Mammary epithelial cell (primary cell): ENCODE measurements at regions of chr12 and their contacts with region 1.

Region 1: DNA sequence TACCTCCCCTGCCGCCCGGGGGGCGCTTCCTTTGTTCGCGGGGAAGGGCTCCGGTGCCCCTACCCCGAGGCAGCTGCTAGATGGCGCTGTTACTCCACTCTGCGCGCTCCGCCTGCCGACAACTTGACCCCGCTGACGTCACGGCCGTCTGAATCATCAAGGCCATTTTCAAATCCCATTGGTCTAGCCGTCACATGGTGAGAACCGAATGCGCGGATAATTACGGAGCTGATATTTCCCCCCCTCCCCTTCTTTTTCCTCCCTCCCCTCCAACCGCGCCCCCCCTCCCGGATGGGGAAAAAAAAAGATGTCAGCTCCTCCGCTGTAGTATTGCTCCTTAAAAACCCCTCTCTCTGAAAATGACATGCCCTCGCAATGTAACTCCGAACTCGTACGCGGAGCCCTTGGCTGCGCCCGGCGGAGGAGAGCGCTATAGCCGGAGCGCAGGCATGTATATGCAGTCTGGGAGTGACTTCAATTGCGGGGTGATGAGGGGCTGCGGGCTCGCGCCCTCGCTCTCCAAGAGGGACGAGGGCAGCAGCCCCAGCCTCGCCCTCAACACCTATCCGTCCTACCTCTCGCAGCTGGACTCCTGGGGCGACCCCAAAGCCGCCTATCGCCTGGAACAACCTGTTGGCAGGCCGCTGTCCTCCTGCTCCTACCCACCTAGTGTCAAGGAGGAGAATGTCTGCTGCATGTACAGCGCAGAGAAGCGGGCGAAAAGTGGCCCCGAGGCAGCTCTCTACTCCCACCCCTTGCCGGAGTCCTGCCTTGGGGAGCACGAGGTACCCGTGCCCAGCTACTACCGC is at the start of gene HOXC10:
- DNase-seq: peak; percentile 75
- H3K4me3 ChIP-seq: peak within 1 kb of the TSS in 2 of 3 experiments; percentile 31 to 38
- H3K27ac ChIP-seq: no peak within 1 kb of the TSS
- H3K4me1 ChIP-seq: peaks cover 23% of the 10 kb centered on the region
- H3K27me3 ChIP-seq: no peaks in the 10 kb centered on the region
- CTCF ChIP-seq: peak; percentile 60 to 80
- total RNA-seq, gene HOXC10: 3.3 to 3.8 TPM

Region 2: DNA sequence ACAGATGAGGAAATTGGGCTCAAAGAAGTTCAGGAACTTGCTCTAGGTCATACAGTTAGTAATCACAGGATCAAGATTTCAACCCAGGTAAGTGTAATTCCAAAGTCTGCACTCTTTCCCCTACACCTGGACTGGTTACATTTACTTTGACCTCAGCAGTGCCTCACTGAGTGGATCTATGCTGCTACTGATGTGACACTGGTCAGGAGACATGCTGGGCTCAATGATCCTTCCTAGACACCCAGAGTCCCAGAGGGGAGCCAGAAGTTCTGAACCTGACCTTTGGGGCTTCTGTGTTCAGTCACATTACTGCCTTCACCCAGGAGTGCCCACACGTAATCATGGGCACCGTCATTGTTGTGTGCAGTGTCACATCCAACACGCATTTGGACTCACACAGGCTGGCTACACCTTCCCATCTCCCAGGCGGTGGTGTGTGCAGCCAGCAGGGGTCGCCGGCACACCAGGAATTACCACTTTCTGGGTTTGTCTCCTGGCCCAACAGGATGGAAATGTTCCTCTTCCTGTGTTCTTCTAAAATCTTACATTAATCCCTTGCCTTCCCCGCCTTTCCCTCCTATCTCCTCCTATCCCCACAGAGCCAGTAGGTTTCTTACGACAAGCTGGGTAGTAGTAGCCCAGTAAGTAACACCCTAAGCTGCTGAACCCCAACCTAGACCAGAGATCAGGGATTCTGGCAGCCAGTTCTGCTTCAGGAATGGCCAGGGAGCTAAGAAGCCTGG is 283.4 kb before region 1 on chr12:
- CTCF ChIA-PET with region 1: no interaction called
- dilution Hi-C with region 1: no loop called
- in situ Hi-C with region 1: no loop called
- intact Hi-C with region 1: loop called (anchors 5 kb)
- DNase-seq: peak; percentile 54
- H3K4me3 ChIP-seq: no peak overlapping the region
- H3K27ac ChIP-seq: no peak overlapping the region
- H3K4me1 ChIP-seq: no peaks in the 10 kb centered on the region
- H3K27me3 ChIP-seq: peaks cover 2% of the 10 kb centered on the region
- CTCF ChIP-seq: peak; percentile 94 to 99

Region 3: GRCh38 chr12:53791735-53792326 is 193.3 kb before region 1 on chr12:
- CTCF ChIA-PET with region 1: no interaction called
- dilution Hi-C with region 1: no loop called
- in situ Hi-C with region 1: no loop called
- intact Hi-C with region 1: loop called (anchors 1 kb)
- DNase-seq: peak; percentile 26
- H3K4me3 ChIP-seq: no peak overlapping the region
- H3K27ac ChIP-seq: no peak overlapping the region
- H3K4me1 ChIP-seq: no peaks in the 10 kb centered on the region
- H3K27me3 ChIP-seq: no peaks in the 10 kb centered on the region
- CTCF ChIP-seq: peak; percentile 48 to 68

Region 4: GRCh38 chr12:53999559-54000104 is 14.5 kb after region 1 on chr12:
- CTCF ChIA-PET with region 1: interaction called, 3 read pairs
- dilution Hi-C with region 1: no loop called
- in situ Hi-C with region 1: no loop called
- intact Hi-C with region 1: loop called (anchors 2 kb)
- DNase-seq: peak; percentile 81
- H3K4me3 ChIP-seq: peak overlapping the region; percentile 94 to 98 (median 95)
- H3K27ac ChIP-seq: peak overlapping the region; percentile 87
- H3K4me1 ChIP-seq: peaks cover 17% of the 10 kb centered on the region
- H3K27me3 ChIP-seq: no peaks in the 10 kb centered on the region
- CTCF ChIP-seq: no peak

Region 5: DNA sequence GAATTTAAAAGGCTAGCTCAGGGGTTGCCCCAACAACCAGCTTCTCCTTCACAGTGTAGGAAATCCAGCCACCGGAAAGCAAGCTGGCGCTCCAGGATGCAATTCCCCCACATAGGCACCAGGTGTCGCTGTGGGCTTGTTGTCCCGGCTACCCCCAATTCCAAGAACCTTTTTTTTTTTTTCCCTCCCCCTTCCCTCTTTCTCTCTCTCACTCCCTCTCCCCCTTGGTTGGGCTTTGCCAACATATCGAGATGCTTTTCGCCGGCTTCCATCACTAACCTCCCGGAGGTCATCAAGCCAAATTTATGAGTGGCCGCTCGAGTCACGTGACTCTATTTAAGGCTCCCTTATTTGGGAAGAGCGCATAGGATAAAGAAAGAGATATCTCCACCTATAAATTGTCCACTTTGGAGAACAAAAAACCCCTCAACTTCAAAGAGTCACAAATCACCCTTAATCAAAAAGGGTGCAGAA is 47.6 kb after region 1 on chr12 and contains the start of gene HOXC5:
- CTCF ChIA-PET with region 1: interaction called, 22 read pairs
- dilution Hi-C with region 1: no loop called
- in situ Hi-C with region 1: no loop called
- intact Hi-C with region 1: loop called (anchors 1 kb)
- DNase-seq: peak; percentile 53
- H3K4me3 ChIP-seq: peak within 1 kb of the TSS; percentile 47 to 60 (median 54)
- H3K27ac ChIP-seq: peak within 1 kb of the TSS; percentile 33
- H3K4me1 ChIP-seq: peaks cover 30% of the 10 kb centered on the region
- H3K27me3 ChIP-seq: no peaks in the 10 kb centered on the region
- CTCF ChIP-seq: peak; percentile 94 to 95
- total RNA-seq, gene HOXC5: 0.67 to 1.4 TPM

Region 6: GRCh38 chr12:54191550-54192022 is 206.5 kb after region 1 on chr12:
- CTCF ChIA-PET with region 1: no interaction called
- dilution Hi-C with region 1: no loop called
- in situ Hi-C with region 1: no loop called
- intact Hi-C with region 1: loop called (anchors 1 kb)
- DNase-seq: peak; percentile 61
- H3K4me3 ChIP-seq: no peak overlapping the region
- H3K27ac ChIP-seq: no peak overlapping the region
- H3K4me1 ChIP-seq: peaks cover 12% of the 10 kb centered on the region
- H3K27me3 ChIP-seq: no peaks in the 10 kb centered on the region
- CTCF ChIP-seq: peak; percentile 84 to 90

Region 7: DNA sequence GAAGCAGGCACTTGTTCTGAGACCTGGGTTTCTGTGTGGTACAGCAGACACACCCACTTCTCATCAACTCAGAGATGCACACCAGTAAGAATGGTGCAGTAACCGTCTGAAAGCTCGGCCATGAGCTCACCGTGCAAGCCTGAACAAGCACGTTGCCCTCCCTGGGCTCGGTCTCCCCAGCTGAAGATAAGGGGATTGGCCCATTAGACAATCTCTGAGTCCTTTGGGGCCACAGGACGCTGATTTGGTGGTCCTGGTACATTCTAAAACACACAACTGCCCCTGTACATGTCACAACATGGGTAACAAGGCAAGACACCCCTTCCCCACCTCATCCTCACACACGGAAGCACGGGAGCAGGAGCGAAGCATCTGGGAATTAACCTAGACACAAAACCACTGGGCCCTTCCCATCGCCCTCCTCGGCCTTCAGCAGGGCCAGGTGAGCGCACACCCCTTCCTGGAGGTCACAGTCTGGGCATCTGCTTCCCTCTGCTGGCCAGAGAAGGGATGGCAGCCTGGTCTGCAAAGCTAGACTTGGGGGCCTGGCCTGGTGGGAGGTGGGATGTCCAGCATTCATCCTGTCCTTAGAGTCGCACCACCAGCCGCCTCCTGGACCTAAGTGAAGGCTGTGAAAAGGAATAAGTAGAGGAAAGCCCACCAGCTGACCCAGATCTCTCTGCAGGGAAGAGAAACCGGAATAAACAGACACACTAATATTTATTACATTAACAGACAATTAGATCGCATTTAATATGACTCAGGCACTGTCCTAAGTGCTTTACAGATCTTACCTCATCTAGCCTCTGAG is 222.6 kb after region 1 on chr12:
- CTCF ChIA-PET with region 1: no interaction called
- dilution Hi-C with region 1: no loop called
- in situ Hi-C with region 1: loop called in 1 of 2 experiments (anchors 10 kb)
- intact Hi-C with region 1: no loop called
- DNase-seq: peak; percentile 81
- H3K4me3 ChIP-seq: no peak overlapping the region
- H3K27ac ChIP-seq: no peak overlapping the region
- H3K4me1 ChIP-seq: peaks cover 13% of the 10 kb centered on the region
- H3K27me3 ChIP-seq: no peaks in the 10 kb centered on the region
- CTCF ChIP-seq: peak; percentile 97 to 99